Vagina (tissue), 2 donors: ENCODE measurements at regions of chr2 and their contacts with region 1.

Region 1: GRCh38 chr2:218257390-218257981 is 3.3 kb upstream of the GPBAR1 start:
- DNase-seq: no peak
- H3K4me3 ChIP-seq: no peak overlapping the region
- H3K27ac ChIP-seq: no peak overlapping the region
- H3K4me1 ChIP-seq: peaks cover 29% of the 10 kb centered on the region
- H3K27me3 ChIP-seq: no peaks in the 10 kb centered on the region
- CTCF ChIP-seq: peak; percentile 8 to 25 (median 14)
- POLR2A ChIP-seq: no peak

Region 2: DNA sequence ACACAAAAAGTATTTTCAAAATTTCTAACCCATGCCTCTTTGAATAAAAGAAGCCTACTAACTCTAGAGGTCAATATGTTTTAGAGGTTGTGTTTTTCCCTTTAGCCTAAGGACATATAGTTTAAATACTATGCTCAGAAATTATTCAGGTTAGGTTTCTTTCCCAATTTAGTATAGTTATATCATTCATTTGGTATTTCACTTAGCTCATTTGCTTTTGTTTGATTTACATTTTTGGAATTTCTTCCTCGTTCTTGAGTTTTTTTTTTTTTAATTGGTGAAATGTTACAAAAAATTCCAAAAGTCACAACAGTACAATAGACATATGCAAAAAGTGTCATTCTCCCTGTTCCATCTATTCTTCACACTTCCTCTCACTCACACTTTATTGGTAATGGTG is 1026.3 kb before region 1 on chr2:
- intact Hi-C with region 1: no loop called
- DNase-seq: no peak
- H3K4me3 ChIP-seq: no peak overlapping the region
- H3K27ac ChIP-seq: no peak overlapping the region
- H3K4me1 ChIP-seq: no peaks in the 10 kb centered on the region
- H3K27me3 ChIP-seq: no peaks in the 10 kb centered on the region
- CTCF ChIP-seq: no peak
- POLR2A ChIP-seq: no peak

Region 3: DNA sequence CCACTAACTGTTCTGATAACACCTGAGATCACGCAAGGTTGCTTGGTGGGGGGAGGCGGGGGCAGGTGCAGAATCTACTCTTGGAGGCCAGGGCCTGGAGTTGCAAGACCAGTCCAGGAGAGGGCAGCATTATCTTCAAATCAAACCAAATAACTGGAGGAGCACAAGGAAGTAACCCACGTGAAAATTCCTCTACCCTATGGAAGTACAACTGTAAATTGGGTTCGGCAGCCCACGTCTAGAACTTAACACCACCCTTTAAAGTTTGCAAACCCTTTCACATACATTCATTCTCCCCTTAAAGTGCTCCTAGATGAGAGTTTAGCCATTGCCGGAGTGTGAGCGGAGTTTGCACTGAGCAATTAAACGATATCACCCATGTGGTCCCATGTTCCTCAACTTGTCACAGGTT is 71.1 kb before region 1 on chr2:
- intact Hi-C with region 1: loop called (anchors 10 kb)
- DNase-seq: no peak
- H3K4me3 ChIP-seq: no peak overlapping the region
- H3K27ac ChIP-seq: no peak overlapping the region
- H3K4me1 ChIP-seq: peaks cover 14% of the 10 kb centered on the region
- H3K27me3 ChIP-seq: no peaks in the 10 kb centered on the region
- CTCF ChIP-seq: peak; percentile 52 to 80 (median 65)
- POLR2A ChIP-seq: no peak